Posterior vena cava (tissue), 2 donors: ENCODE measurements at regions of chr3 and their contacts with region 1.

Region 1: GRCh38 chr3:17915341-17915740 is 172.9 kb upstream of the TBC1D5 start:
- DNase-seq: no peak

Region 2: DNA sequence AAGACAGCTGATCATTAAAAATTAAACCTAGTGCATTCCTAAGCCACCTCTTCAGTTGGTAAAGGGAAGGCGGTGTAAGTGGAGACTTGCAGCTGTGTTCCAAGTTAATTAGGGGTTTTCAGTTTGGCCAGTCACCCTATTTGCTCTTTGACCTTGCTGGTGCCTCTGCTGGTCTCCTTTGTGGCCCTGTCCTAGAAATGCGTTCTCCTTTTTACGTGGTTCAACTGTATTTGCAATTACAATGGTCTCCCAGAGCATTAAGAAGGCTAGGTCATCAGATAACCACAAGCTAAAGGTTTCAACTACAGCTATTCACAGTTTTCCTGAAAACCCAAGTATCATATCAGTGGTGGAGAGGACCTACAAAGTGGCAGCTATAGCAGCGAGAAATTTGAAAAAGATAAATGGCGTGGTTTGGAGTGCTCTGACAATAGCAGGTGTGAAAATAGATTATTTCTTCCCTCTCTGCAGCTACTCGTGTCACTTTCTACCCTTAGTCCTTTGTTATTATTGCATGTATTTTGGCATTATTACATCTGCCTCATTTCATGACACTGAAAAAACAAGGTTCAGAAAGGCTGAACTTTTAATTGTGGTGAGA is 30.6 kb after region 1 on chr3:
- intact Hi-C with region 1: loop called in 1 of 2 experiments (anchors 1 kb)
- DNase-seq: no peak